HepG2 (cell line): ENCODE measurements at regions of chr4 and their contacts with region 1.

Region 1: GRCh38 chr4:36244257-36245079 is at the start of gene ARAP2:
- DNase-seq: no peak
- ATAC-seq: peak; percentile 95
- H3K4me3 ChIP-seq: peak within 1 kb of the TSS; percentile 54 to 69 (median 55)
- H3K27ac ChIP-seq: no peak within 1 kb of the TSS
- H3K4me1 ChIP-seq: peaks cover 15% of the 10 kb centered on the region; the same call in 1 of the 2 replicates
- H3K27me3 ChIP-seq: peaks cover 0 to 7% of the 10 kb centered on the region in 2 experiments; a peak in 1 of 5 replicates
- CTCF ChIP-seq: 0 out of 2 replicates have a peak, but pooled peaks have one; percentile 12
- EP300 ChIP-seq: no peak
- POLR2A ChIP-seq: no peak
- RAD21 ChIP-seq: no peak
- total RNA-seq, gene ARAP2: 1.4 and 1.5 TPM in 2 replicates

Region 2: GRCh38 chr4:36211084-36211483 is 33.4 kb before region 1 on chr4:
- CTCF ChIA-PET with region 1: no interaction called
- POLR2A ChIA-PET with region 1: no interaction called
- in situ Hi-C with region 1: no loop called
- intact Hi-C with region 1: loop called (anchors 1 kb)
- DNase-seq: no peak
- ATAC-seq: no peak
- H3K4me3 ChIP-seq: no peak overlapping the region
- H3K27ac ChIP-seq: no peak overlapping the region
- H3K4me1 ChIP-seq: no peaks in the 10 kb centered on the region
- H3K27me3 ChIP-seq: no peaks in the 10 kb centered on the region
- CTCF ChIP-seq: no peak
- EP300 ChIP-seq: no peak
- POLR2A ChIP-seq: no peak
- RAD21 ChIP-seq: no peak